ENCODE measurements at regions of chr7 and their contacts with region 1.

Region 1: DNA sequence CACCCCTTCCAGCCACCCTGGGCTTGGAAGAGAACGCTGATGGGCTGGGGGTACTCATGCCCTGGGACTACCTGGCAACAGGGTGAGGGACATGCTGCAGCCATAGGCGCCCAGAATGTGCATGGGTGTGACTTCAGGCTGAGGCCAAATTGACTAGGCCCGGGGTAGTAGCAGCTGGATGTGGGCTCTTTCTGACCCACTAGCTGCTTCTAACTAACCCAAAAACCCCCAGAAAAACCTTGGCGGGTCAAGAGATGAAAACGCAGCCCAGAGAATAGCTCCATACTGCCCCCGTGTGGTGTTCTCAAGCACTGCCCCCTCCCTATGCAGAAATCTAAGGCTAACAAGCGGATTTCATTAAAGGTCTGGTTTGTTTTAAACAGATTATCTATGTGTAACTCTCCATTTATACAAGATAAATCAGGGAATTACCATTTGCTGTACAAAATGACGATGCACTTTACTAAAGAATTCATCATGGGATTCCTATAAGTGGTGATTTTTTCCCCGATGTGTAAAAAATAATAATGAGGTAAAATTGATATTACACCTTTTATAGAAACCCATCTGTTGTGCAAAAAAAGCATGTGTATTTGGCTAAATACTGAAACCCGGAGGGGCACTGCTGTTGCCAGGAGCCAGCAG is 4.2 kb downstream of the SMARCD3 start:
- DNase-seq: peak; percentile 82
- CTCF ChIP-seq: peak; percentile 70

Region 2: DNA sequence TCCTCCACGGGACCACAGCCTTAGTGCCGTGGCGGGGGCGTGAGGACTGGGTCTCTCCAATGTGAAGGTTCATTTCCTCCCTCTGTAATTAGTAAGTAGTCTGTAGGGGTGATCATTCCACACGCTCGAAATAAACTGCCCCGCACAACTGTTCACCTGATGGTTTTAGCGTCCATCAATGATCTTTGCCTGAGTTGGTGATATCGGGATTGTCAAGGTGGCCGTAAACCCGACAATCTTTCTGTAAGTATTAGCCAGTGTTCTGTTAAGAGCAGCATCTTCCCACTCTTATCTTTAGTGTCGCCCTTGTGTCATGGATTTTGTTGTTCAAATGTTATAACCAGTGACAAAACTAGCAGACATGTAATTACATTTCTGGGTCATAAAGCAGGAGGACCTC is 140.3 kb before region 1 on chr7:
- CTCF ChIA-PET with region 1: no interaction called
- POLR2A ChIA-PET with region 1: no interaction called
- DNase-seq: no peak
- CTCF ChIP-seq: no peak

Region 3: DNA sequence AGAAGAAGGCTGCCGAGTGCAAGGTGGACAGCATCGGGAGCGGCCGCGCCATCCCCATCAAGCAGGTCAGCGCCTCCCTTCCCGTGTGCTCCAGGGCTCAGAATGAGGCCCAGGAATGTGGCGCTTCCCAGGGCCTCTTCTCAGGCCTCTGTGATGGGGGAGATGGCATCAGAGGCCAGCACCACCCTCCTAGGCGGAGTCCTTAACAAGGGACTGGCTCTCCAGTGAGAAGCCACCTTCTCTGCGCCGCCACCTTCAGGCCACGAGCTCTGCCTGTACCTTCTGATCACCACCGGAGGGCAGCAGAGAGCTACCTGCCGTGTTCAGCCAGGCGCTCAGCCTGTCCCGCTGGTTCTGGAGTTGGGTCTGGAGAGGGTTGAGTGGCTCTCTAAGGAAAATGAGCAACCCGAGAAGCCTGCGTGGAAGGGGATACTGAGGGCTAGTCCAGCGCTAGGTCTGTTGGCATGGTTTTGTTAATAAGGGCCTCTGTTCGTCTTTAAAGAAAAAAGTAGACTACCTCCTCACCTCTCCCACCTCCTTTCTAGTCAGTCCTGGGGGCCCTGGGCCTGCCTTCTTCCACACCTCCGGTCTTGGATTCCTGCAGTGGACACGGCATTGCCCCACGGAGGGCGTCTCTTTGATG is 120.4 kb before region 1 on chr7:
- CTCF ChIA-PET with region 1: interaction called, 20 read pairs
- POLR2A ChIA-PET with region 1: no interaction called
- DNase-seq: peak; percentile 96
- CTCF ChIP-seq: peak; percentile 100

Region 4: GRCh38 chr7:151174246-151175046 is 69.9 kb before region 1 on chr7:
- CTCF ChIA-PET with region 1: interaction called, 11 read pairs
- POLR2A ChIA-PET with region 1: no interaction called
- DNase-seq: no peak
- CTCF ChIP-seq: no peak

Region 5: GRCh38 chr7:151226875-151227782 is 17.2 kb before region 1 on chr7 and contains the start of gene ABCF2:
- CTCF ChIA-PET with region 1: interaction called, 78 read pairs
- POLR2A ChIA-PET with region 1: interaction called, 13 read pairs
- DNase-seq: peak; percentile 98
- CTCF ChIP-seq: no peak

Region 6: GRCh38 chr7:151256410-151257045 is 12.2 kb after region 1 on chr7:
- CTCF ChIA-PET with region 1: interaction called, 28 read pairs
- POLR2A ChIA-PET with region 1: no interaction called
- DNase-seq: no peak
- CTCF ChIP-seq: no peak

Measured in GM10248 (cell line).